ENCODE measurements at regions of chr13 and their contacts with region 1.

Region 1: DNA sequence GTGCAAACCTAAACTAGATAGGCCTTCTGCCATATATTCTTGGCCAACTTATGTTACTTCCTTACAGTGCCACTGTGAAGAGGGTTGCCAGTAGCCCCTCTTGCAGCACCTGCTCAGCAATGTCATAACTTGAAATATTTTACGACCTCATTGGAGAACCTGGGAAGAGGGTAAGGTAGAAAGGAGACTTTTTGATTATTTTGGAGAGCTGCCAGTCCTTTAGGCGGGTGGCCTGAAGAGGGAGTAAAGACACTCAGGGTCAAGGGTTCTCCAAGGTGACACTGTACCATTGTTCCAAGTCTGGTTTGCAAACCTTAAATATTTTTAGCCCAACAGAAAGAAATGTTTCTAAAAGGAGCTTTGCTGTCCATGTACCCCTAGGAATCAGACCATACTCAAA is 118.3 kb downstream of the FLT1 start:
- DNase-seq: no peak
- H3K4me3 ChIP-seq: no peak overlapping the region
- H3K27ac ChIP-seq: no peak overlapping the region
- H3K4me1 ChIP-seq: no peaks in the 10 kb centered on the region
- H3K27me3 ChIP-seq: no peaks in the 10 kb centered on the region
- CTCF ChIP-seq: no peak
- EP300 ChIP-seq: no peak
- POLR2A ChIP-seq: no peak

Region 2: DNA sequence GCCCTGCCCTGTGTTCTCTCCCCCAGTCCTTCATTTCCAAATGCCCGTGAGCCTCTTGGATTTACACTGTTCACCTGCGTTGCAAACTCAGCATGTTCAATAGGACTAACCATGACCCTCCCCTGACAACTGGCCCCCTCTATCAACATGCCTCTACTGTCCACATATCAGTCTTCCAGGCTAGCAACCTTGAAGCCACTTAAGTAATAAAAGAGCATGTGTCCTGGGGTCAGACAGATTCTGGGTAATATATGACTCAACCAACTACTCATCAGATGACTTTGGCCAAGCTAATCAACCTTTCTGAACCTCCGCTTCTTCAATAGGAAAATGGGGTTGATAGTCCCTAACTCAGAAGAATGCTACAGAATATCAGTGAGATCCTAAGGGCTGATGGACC is 471.9 kb before region 1 on chr13:
- intact Hi-C with region 1: loop called in 1 of 4 experiments (anchors 5 kb)
- DNase-seq: no peak
- H3K4me3 ChIP-seq: no peak overlapping the region
- H3K27ac ChIP-seq: no peak overlapping the region
- H3K4me1 ChIP-seq: no peaks in the 10 kb centered on the region
- H3K27me3 ChIP-seq: no peaks in the 10 kb centered on the region
- CTCF ChIP-seq: no peak
- EP300 ChIP-seq: no peak
- POLR2A ChIP-seq: no peak

Region 3: DNA sequence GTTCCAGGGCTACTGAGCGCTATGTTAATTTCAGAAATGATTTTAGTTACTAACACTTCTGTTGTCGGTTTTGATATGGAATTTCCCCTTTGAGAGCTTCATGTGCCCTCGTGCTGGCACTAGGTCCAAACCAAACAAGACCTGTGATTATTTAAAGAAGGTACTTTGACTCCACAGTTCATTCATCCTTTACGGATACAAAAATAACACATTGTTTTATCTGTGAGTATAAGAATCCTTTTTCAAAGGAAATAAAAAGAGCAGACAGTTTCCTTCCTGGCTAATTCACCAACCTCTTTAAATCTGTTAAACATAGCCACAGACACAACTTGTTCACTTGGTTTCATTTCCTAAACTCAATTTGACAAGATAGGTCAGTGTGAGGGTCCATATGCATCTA is 22.9 kb before region 1 on chr13:
- intact Hi-C with region 1: loop called in 1 of 4 experiments (anchors 2 kb)
- DNase-seq: no peak
- H3K4me3 ChIP-seq: no peak overlapping the region
- H3K27ac ChIP-seq: no peak overlapping the region
- H3K4me1 ChIP-seq: no peaks in the 10 kb centered on the region
- H3K27me3 ChIP-seq: no peaks in the 10 kb centered on the region
- CTCF ChIP-seq: no peak
- EP300 ChIP-seq: no peak
- POLR2A ChIP-seq: no peak

Measured in ovary (tissue), 10 donors.